ENCODE measurements at regions of chr6 and their contacts with region 1.

Region 1: DNA sequence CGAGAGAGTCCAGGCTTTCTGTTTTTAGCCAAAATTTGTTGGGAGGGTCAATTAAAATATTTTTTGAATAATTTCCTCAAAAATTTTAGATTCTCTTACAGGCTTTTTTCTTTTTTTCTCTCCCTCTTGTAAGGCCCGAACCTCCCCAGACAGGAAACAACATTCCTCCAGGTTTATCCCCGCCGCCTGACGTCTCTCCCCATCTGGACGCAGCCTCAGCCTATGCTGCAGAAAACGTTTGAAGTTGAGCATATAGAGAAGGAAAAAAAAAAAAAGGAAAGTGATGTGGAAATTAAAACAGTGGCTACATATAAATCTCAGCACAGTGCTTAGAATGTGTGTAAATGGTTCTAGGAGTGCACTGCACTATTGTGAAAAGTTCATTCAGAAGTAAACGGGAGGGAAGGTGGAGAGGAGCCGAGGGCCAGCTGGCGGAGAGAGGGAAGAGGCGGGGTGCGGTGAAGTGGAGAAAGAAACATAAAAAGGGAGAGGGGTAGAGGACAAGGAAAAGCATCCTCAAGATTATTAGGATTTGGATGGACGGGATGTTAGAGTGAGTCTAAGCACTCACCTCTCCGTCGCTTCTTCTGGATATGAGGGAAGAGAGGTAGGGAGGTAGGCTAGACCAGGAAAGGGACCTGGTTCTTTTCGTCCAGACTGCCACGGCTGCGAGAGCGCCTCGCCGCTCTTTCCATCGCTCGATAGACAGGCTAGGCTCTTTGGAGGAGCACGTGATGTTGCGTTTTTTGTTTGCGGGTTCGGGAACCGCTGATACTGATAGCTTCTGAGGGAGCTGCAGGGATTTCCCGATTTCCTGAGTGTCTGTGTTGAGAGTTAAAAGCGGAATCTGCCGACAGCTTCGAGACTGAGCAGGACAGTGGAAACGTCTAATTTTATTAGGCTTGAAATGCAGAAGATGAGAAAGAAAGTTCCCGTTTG is 98.7 kb downstream of the TRIM27 start:
- DNase-seq: peak in 2 of 4 experiments; percentile 26 to 47
- ATAC-seq: peak; percentile 80
- H3K4me3 ChIP-seq: peak overlapping the region; percentile 27
- H3K27ac ChIP-seq: no peak overlapping the region
- H3K4me1 ChIP-seq: peaks cover 0 to 13% of the 10 kb centered on the region in 2 experiments; a peak in 2 of 5 replicates
- H3K27me3 ChIP-seq: peaks cover 0 to 10% of the 10 kb centered on the region in 2 experiments; a peak in 2 of 5 replicates
- CTCF ChIP-seq: no peak
- EP300 ChIP-seq: no peak
- POLR2A ChIP-seq: no peak
- RAD21 ChIP-seq: no peak

Region 2: DNA sequence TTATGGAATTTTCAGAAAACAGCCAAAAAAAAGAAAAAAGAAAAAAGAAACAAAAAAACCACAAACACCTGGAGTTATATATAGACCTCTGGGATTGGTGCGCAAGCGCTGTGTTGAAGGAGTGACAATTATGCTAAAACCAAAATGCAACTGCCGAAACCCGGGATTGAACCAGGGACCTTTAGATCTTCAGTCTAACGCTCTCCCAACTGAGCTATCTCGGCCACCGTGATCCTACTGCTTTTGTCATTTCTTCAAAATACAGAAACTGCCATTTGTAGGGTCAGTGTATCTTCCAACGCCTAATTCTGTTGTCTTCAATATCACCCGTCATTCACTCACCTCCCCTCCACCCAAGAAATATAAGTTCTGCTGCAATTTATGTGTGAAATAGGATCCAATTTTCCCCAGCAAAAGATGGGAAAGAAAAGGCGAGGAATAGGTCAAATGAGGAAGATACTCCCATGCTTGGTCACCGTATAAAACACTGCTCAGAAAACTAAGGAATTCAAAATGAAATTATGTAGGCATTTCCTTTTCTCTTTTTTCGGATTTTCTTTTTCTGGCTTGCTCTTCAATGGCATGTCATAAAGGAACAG is 17.3 kb before region 1 on chr6:
- CTCF ChIA-PET with region 1: no interaction called
- POLR2A ChIA-PET with region 1: interaction called, 12 read pairs
- in situ Hi-C with region 1: no loop called
- intact Hi-C with region 1: no loop called
- DNase-seq: peak; percentile 63 to 95 (median 70)
- ATAC-seq: peak; percentile 49
- H3K4me3 ChIP-seq: peak overlapping the region; percentile 52
- H3K27ac ChIP-seq: peak overlapping the region; percentile 25
- H3K4me1 ChIP-seq: peaks cover 11 to 12% of the 10 kb centered on the region in 2 experiments; a peak in 4 of 5 replicates
- H3K27me3 ChIP-seq: no peaks in the 10 kb centered on the region
- CTCF ChIP-seq: no peak
- EP300 ChIP-seq: peak; percentile 79
- POLR2A ChIP-seq: no peak
- RAD21 ChIP-seq: no peak; a peak in 1 of 4 replicates

Measured in K562 (cell line).